Activated CD8-positive, alpha-beta T cell treated with anti-CD3 and anti-CD28 coated beads, Interleukin-2, amount 10 ng/mL, durations not matched to agents 7 days and 5 days (primary cell): ENCODE measurements at regions of chr3 and their contacts with region 1.

Region 1: DNA sequence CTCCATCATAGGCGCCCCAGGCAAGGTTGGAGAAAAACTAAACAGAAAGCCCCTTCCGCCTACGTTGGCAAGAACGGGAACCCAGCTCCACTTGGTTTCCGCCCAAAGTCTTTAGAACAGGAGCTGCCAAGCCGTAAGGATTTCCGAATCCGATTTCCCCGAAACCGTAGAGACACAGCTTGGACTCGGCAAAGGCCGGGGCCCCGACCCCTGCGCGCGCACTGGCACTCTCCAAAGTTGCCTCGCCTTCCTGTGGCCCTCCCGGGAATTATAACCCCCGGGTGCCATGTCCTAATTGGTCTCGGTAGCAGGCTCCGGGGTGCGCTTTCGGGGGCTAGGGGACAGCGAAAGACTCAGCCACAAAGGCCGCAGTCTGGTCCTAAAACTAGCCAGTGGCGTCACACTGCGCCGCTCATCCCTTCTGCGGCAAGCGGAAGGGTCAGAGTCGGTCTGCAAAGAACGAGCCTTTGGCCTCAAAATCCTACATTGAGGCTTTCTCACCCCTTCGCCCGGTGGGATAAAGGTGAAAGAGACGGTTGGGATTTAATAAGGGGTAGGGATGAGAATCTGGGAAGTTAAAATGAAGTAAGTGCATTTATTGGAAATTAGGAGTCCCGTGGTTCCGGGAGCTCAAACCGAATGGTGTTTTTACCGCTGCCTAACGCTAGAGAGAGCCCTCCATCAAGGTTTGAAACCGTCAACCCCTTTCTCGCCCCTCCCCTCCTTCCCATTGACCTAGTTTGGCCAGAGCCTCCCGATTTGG is 6.8 kb downstream of the BCL6 start:
- DNase-seq: peak; percentile 84
- ATAC-seq: peak; percentile 24
- H3K4me3 Mint-ChIP-seq: peak overlapping the region; percentile 100
- H3K27ac Mint-ChIP-seq: peak overlapping the region; percentile 100
- H3K4me1 Mint-ChIP-seq: peaks cover 53% of the 10 kb centered on the region
- H3K27me3 Mint-ChIP-seq: no peaks in the 10 kb centered on the region

Region 2: GRCh38 chr3:187473778-187474406 is 264.6 kb before region 1 on chr3:
- CTCF ChIA-PET with region 1: no interaction called
- POLR2A ChIA-PET with region 1: no interaction called
- DNase-seq: no peak
- ATAC-seq: no peak
- H3K4me3 Mint-ChIP-seq: no peak overlapping the region
- H3K27ac Mint-ChIP-seq: no peak overlapping the region
- H3K4me1 Mint-ChIP-seq: no peaks in the 10 kb centered on the region
- H3K27me3 Mint-ChIP-seq: no peaks in the 10 kb centered on the region

Region 3: DNA sequence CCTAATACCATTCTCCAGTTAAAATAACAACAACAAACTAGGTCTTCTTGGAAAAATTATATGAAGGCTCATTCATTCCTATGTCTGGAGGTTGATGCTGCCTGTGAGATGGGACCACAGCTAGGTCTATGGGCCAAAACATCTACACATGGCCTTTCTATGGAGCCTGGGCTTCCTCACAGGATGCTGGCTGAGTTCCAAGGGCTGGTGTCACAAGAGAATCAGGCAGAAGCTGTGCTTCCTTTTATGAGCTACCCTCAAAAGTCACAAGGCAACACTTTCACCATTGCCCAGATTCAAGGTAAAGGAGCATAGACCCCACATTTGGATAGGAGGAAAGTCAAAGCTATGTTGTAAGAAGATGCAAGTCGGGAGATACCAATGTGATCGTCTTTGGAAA is 31.5 kb before region 1 on chr3:
- CTCF ChIA-PET with region 1: no interaction called
- POLR2A ChIA-PET with region 1: no interaction called
- DNase-seq: no peak
- ATAC-seq: no peak
- H3K4me3 Mint-ChIP-seq: no peak overlapping the region
- H3K27ac Mint-ChIP-seq: no peak overlapping the region
- H3K4me1 Mint-ChIP-seq: no peaks in the 10 kb centered on the region
- H3K27me3 Mint-ChIP-seq: peaks cover 7% of the 10 kb centered on the region

Region 4: DNA sequence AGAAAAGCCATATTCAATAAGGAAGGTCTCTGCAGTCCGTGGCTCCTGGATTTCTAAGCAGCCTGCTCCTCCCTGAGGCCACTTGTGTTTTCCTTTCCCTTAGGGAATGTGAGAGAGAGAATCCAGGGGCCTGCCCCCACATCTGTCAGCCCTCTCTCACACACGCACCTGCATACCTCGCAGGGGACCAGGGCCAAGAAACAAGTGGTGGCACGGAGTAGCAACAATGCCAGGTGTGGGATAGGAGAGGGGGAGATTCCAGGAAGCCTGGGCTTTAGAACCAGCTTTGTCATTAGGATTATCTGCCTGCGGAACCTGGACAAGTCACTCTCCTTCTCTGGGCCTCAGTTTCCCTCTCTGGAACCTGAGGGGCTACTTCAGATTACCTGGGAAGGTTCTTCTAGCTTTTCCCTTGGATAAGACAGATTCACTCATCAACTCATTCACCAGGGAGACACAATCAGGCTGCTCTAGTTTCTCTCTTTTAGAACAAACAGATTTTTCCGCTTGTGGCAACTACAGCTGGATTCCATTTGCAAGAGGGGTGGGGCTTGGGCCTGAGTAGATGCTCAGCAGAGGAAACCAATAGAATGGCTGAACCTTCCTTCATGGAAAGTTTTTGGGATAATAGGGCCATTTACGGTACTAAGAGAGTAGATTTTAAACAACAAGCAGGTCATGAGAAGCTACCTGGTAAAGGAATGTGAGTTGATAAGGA is 12.7 kb before region 1 on chr3:
- CTCF ChIA-PET with region 1: interaction called, 16 read pairs
- POLR2A ChIA-PET with region 1: interaction called, 3 read pairs
- DNase-seq: no peak
- ATAC-seq: no peak
- H3K4me3 Mint-ChIP-seq: no peak overlapping the region
- H3K27ac Mint-ChIP-seq: no peak overlapping the region
- H3K4me1 Mint-ChIP-seq: no peaks in the 10 kb centered on the region
- H3K27me3 Mint-ChIP-seq: no peaks in the 10 kb centered on the region

Region 5: DNA sequence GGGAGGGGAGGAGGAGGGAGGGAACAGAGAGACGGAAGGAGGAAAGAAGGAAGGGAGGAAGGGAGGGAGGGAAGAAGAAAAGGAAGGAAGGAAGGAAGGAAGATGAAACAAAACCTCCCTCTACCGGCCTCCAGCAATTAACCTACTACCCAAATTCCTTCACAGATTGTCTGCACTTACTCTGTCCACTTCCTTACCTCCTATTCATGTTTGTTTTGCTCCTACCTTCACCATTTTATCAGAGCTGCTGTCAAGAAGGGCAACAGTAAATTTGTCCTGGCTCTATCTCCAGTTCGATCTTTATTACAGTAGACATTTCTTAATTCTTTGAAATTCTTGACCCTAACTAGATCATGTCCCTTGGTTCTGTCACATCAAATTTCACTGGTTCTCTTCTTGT is 51.4 kb after region 1 on chr3:
- CTCF ChIA-PET with region 1: no interaction called
- POLR2A ChIA-PET with region 1: no interaction called
- DNase-seq: no peak
- ATAC-seq: no peak
- H3K4me3 Mint-ChIP-seq: no peak overlapping the region
- H3K27ac Mint-ChIP-seq: no peak overlapping the region
- H3K4me1 Mint-ChIP-seq: peaks cover 20% of the 10 kb centered on the region
- H3K27me3 Mint-ChIP-seq: no peaks in the 10 kb centered on the region

Region 6: GRCh38 chr3:187963677-187964385 is 225.3 kb after region 1 on chr3:
- CTCF ChIA-PET with region 1: interaction called, 13 read pairs
- POLR2A ChIA-PET with region 1: interaction called, 4 read pairs
- DNase-seq: no peak
- ATAC-seq: peak; percentile 62
- H3K4me3 Mint-ChIP-seq: no peak overlapping the region
- H3K27ac Mint-ChIP-seq: no peak overlapping the region
- H3K4me1 Mint-ChIP-seq: peaks cover 41% of the 10 kb centered on the region
- H3K27me3 Mint-ChIP-seq: no peaks in the 10 kb centered on the region

Region 7: GRCh38 chr3:188205992-188206416 is 467.5 kb after region 1 on chr3:
- CTCF ChIA-PET with region 1: interaction called, 18 read pairs
- POLR2A ChIA-PET with region 1: no interaction called
- DNase-seq: no peak
- ATAC-seq: no peak
- H3K4me3 Mint-ChIP-seq: no peak overlapping the region
- H3K27ac Mint-ChIP-seq: no peak overlapping the region
- H3K4me1 Mint-ChIP-seq: peaks cover 9% of the 10 kb centered on the region
- H3K27me3 Mint-ChIP-seq: no peaks in the 10 kb centered on the region

Region 8: DNA sequence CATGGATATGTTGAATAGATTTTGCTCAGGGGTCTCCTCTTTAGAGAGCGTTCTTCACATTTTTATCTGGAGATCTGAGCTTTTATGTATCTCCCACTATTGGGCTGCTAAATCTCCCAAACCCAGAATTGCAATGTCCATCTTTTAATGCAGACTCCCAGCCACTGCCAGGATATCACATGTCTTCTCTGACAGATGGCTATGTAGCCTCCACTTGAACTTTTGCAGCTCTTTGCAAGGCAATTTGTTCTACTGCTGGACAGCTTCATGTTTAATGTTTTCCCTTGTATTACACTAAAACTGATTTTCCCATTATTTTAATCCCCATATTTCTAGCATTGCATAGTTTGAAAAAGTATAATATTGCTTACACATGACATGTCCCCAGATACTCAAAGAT is 592.7 kb after region 1 on chr3:
- CTCF ChIA-PET with region 1: interaction called, 14 read pairs
- POLR2A ChIA-PET with region 1: no interaction called
- DNase-seq: no peak
- ATAC-seq: no peak
- H3K4me3 Mint-ChIP-seq: no peak overlapping the region
- H3K27ac Mint-ChIP-seq: no peak overlapping the region
- H3K4me1 Mint-ChIP-seq: peaks cover 30% of the 10 kb centered on the region
- H3K27me3 Mint-ChIP-seq: no peaks in the 10 kb centered on the region

Region 9: DNA sequence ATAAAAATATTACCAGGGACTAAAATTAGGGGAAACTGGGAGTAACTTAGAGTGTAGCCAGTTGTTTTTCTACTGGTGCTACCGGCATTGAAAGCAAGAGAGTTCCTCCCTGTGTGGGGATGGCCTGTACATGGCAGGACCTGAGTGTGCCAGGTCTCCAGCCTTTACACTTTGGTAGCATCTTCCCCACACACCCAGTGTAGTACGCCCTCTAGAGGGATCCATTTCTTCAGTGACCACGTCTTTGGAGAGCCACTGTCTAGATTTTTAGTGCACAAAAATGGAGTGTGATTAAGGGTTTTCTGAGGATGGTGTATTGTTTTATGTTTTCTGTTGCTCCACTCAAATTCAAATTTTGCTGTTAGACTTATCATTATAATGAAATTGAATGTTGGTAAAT is 926.3 kb after region 1 on chr3:
- CTCF ChIA-PET with region 1: interaction called, 23 read pairs
- POLR2A ChIA-PET with region 1: no interaction called
- DNase-seq: peak; percentile 27
- ATAC-seq: no peak
- H3K4me3 Mint-ChIP-seq: no peak overlapping the region
- H3K27ac Mint-ChIP-seq: no peak overlapping the region
- H3K4me1 Mint-ChIP-seq: no peaks in the 10 kb centered on the region
- H3K27me3 Mint-ChIP-seq: no peaks in the 10 kb centered on the region

Region 10: GRCh38 chr3:189121092-189121491 is 1382.6 kb after region 1 on chr3:
- CTCF ChIA-PET with region 1: interaction called, 18 read pairs
- POLR2A ChIA-PET with region 1: no interaction called
- DNase-seq: no peak
- ATAC-seq: no peak
- H3K4me3 Mint-ChIP-seq: peak overlapping the region; percentile 37
- H3K27ac Mint-ChIP-seq: peak overlapping the region; percentile 47
- H3K4me1 Mint-ChIP-seq: peaks cover 19% of the 10 kb centered on the region
- H3K27me3 Mint-ChIP-seq: no peaks in the 10 kb centered on the region